CD8-positive, alpha-beta T cell (primary cell): ENCODE measurements at regions of chr3 and their contacts with region 1.

Region 1: DNA sequence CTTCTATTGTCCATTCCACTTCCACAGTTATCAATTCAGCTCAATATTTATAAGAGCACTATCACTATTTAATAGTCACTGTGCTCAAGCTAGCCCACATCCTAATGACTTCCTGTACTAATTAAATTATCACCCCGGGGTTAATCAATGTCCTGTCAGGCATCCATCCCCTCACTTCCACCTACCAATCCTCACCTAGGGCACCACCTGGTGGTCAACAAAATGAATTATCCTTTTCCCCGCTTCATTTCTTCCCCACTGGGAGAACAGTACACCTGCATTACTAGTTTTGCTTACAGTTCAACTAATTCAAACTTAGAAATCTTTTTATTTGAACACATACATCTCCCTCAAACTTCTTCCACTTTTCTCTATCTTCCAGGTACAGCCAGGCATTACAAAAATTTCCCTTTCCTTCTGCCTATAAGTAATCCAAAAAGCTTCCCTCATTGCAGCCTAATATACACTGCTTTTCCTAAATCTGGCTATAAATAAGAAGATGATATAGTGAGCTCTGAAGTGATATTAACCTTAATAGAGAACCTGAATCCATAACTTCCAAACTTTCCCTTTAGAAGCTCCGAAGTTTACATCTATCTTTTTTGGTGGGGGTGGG is 68.5 kb downstream of the TMCC1 start:
- DNase-seq: peak in 7 of 9 experiments; percentile 11 to 76 (median 47)
- ATAC-seq: peak; percentile 63
- H3K4me3 ChIP-seq: no peak overlapping the region
- H3K4me3 Mint-ChIP-seq: no peak overlapping the region
- H3K27ac ChIP-seq: no peak overlapping the region
- H3K27ac Mint-ChIP-seq: no peak overlapping the region
- H3K4me1 ChIP-seq: peaks cover 10% of the 10 kb centered on the region
- H3K4me1 Mint-ChIP-seq: peaks cover 27% of the 10 kb centered on the region
- H3K27me3 ChIP-seq: no peaks in the 10 kb centered on the region
- H3K27me3 Mint-ChIP-seq: no peaks in the 10 kb centered on the region
- CTCF ChIP-seq: peak; percentile 72

Region 2: GRCh38 chr3:129383292-129383860 is 441.7 kb before region 1 on chr3:
- CTCF ChIA-PET with region 1: interaction called, 3 read pairs
- POLR2A ChIA-PET with region 1: no interaction called
- intact Hi-C with region 1: loop called (anchors 1 to 2 kb)
- DNase-seq: peak; percentile 18 to 66 (median 49)
- ATAC-seq: peak; percentile 97
- H3K4me3 ChIP-seq: no peak overlapping the region
- H3K4me3 Mint-ChIP-seq: no peak overlapping the region
- H3K27ac ChIP-seq: no peak overlapping the region
- H3K27ac Mint-ChIP-seq: no peak overlapping the region
- H3K4me1 ChIP-seq: no peaks in the 10 kb centered on the region
- H3K4me1 Mint-ChIP-seq: no peaks in the 10 kb centered on the region
- H3K27me3 ChIP-seq: no peaks in the 10 kb centered on the region
- H3K27me3 Mint-ChIP-seq: no peaks in the 10 kb centered on the region
- CTCF ChIP-seq: peak; percentile 62

Region 3: GRCh38 chr3:129490242-129491045 is 334.6 kb before region 1 on chr3:
- CTCF ChIA-PET with region 1: interaction called, 40 read pairs
- POLR2A ChIA-PET with region 1: interaction called, 3 read pairs
- intact Hi-C with region 1: loop called (anchors 1 kb)
- DNase-seq: peak; percentile 27 to 79 (median 49)
- ATAC-seq: peak; percentile 97
- H3K4me3 ChIP-seq: no peak overlapping the region
- H3K4me3 Mint-ChIP-seq: no peak overlapping the region
- H3K27ac ChIP-seq: no peak overlapping the region
- H3K27ac Mint-ChIP-seq: no peak overlapping the region
- H3K4me1 ChIP-seq: no peaks in the 10 kb centered on the region
- H3K4me1 Mint-ChIP-seq: peaks cover 2% of the 10 kb centered on the region
- H3K27me3 ChIP-seq: no peaks in the 10 kb centered on the region
- H3K27me3 Mint-ChIP-seq: no peaks in the 10 kb centered on the region
- CTCF ChIP-seq: peak; percentile 72

Region 4: GRCh38 chr3:129650256-129650872 is 174.7 kb before region 1 on chr3:
- CTCF ChIA-PET with region 1: interaction called, 13 read pairs
- POLR2A ChIA-PET with region 1: interaction called, 3 read pairs
- intact Hi-C with region 1: loop called (anchors 1 to 2 kb)
- DNase-seq: peak; percentile 14 to 68 (median 56)
- ATAC-seq: peak; percentile 46
- H3K4me3 ChIP-seq: no peak overlapping the region
- H3K4me3 Mint-ChIP-seq: no peak overlapping the region
- H3K27ac ChIP-seq: no peak overlapping the region
- H3K27ac Mint-ChIP-seq: no peak overlapping the region
- H3K4me1 ChIP-seq: no peaks in the 10 kb centered on the region
- H3K4me1 Mint-ChIP-seq: peaks cover 2% of the 10 kb centered on the region
- H3K27me3 ChIP-seq: no peaks in the 10 kb centered on the region
- H3K27me3 Mint-ChIP-seq: no peaks in the 10 kb centered on the region
- CTCF ChIP-seq: peak; percentile 65

Region 5: DNA sequence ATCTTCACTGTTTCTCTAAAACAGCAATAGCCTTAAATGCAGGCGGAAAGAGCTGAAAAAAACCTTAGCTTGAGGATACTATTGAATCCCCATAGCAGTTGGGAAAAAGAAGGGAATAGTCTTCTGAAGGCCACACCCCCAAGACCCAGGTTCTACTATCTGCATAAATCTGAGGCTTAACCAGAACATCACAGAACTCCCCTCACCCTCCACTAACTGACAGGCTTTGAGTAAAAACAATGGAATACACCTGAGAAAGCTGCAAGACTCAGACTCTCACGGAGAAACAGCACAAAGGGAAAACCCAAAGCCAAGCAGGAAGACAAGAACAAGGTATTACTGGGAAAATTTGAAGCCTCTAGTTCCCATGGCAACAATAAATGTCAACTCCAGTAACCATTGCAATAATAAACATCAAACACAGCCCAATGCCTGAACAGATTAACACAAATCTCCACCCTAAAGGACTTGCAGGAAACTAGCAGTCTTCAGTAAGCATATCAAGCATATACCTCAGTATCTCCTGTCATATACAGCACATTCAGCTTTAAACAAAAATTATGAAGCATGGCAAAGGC is 12.1 kb after region 1 on chr3:
- CTCF ChIA-PET with region 1: interaction called, 11 read pairs
- POLR2A ChIA-PET with region 1: interaction called, 3 read pairs
- intact Hi-C with region 1: no loop called
- DNase-seq: no peak
- ATAC-seq: no peak
- H3K4me3 ChIP-seq: no peak overlapping the region
- H3K4me3 Mint-ChIP-seq: no peak overlapping the region
- H3K27ac ChIP-seq: no peak overlapping the region
- H3K27ac Mint-ChIP-seq: no peak overlapping the region
- H3K4me1 ChIP-seq: peaks cover 8% of the 10 kb centered on the region
- H3K4me1 Mint-ChIP-seq: peaks cover 5% of the 10 kb centered on the region
- H3K27me3 ChIP-seq: no peaks in the 10 kb centered on the region
- H3K27me3 Mint-ChIP-seq: no peaks in the 10 kb centered on the region
- CTCF ChIP-seq: no peak

Region 6: GRCh38 chr3:129934234-129935123 is 109.4 kb after region 1 on chr3:
- CTCF ChIA-PET with region 1: interaction called, 8 read pairs
- POLR2A ChIA-PET with region 1: no interaction called
- intact Hi-C with region 1: loop called (anchors 2 kb)
- DNase-seq: peak in 8 of 9 experiments; percentile 5 to 63 (median 40)
- ATAC-seq: peak; percentile 62
- H3K4me3 ChIP-seq: no peak overlapping the region
- H3K4me3 Mint-ChIP-seq: no peak overlapping the region
- H3K27ac ChIP-seq: no peak overlapping the region
- H3K27ac Mint-ChIP-seq: no peak overlapping the region
- H3K4me1 ChIP-seq: no peaks in the 10 kb centered on the region
- H3K4me1 Mint-ChIP-seq: peaks cover 8% of the 10 kb centered on the region
- H3K27me3 ChIP-seq: no peaks in the 10 kb centered on the region
- H3K27me3 Mint-ChIP-seq: peaks cover 3% of the 10 kb centered on the region
- CTCF ChIP-seq: peak; percentile 85